ENCODE measurements at regions of chr12 and their contacts with region 1.

Region 1: DNA sequence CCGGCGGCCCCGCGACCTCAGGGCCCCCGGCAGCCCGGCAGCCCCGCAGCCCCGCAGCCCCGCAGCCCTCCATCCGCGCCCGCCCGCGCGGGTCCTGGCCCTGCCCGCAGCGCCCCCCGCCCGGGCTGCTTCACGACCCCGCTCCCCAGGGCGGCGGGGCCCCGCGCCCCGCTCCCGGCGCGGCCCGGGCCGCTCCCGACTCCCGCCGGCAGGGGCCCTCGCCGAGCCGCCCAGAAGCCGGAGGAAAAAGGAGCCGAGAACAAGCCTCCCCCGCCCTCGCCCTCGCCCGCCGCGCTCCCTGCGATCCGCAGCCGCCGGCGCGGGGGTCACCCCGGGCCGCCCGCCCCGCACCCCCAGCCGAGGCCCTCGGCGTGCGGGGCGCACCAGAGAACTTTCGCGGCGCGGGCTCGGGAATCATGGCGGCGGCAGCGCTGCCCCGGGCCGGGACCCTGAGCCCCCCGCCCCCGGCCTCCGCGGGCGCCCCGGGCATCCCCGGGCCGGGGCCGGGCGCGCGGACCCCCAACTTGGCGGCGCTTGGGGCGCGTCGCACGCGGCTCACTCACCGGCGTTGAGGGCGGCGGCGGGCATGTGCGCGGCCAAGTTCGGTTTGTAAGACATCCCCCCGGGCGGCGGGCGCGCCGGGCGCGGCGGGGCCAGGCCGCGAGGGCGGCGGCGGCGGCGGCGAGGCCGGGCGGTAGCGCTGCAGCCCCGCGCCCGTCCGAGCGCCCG is 491 bp downstream of the CDK2AP1 start:
- DNase-seq: peak; percentile 83
- H3K4me3 Mint-ChIP-seq: no peak overlapping the region
- H3K27ac Mint-ChIP-seq: no peak overlapping the region
- H3K4me1 Mint-ChIP-seq: peaks cover 19% of the 10 kb centered on the region
- H3K27me3 Mint-ChIP-seq: no peaks in the 10 kb centered on the region

Region 2: GRCh38 chr12:123614531-123614930 is 343.4 kb after region 1 on chr12:
- CTCF ChIA-PET with region 1: no interaction called
- POLR2A ChIA-PET with region 1: no interaction called
- intact Hi-C with region 1: loop called (anchors 2 kb)
- DNase-seq: no peak
- H3K4me3 Mint-ChIP-seq: no peak overlapping the region
- H3K27ac Mint-ChIP-seq: peak overlapping the region; percentile 38
- H3K4me1 Mint-ChIP-seq: peaks cover 2% of the 10 kb centered on the region
- H3K27me3 Mint-ChIP-seq: no peaks in the 10 kb centered on the region

Region 3: GRCh38 chr12:123655420-123655819 is 384.3 kb after region 1 on chr12:
- CTCF ChIA-PET with region 1: no interaction called
- POLR2A ChIA-PET with region 1: no interaction called
- intact Hi-C with region 1: no loop called
- DNase-seq: no peak
- H3K4me3 Mint-ChIP-seq: no peak overlapping the region
- H3K27ac Mint-ChIP-seq: no peak overlapping the region
- H3K4me1 Mint-ChIP-seq: peaks cover 15% of the 10 kb centered on the region
- H3K27me3 Mint-ChIP-seq: no peaks in the 10 kb centered on the region

Measured in activated CD4-positive, alpha-beta memory T cell treated with anti-CD3 and anti-CD28 coated beads for 36 hours (primary cell).